ENCODE measurements at regions of chr11 and their contacts with region 1.

Region 1: DNA sequence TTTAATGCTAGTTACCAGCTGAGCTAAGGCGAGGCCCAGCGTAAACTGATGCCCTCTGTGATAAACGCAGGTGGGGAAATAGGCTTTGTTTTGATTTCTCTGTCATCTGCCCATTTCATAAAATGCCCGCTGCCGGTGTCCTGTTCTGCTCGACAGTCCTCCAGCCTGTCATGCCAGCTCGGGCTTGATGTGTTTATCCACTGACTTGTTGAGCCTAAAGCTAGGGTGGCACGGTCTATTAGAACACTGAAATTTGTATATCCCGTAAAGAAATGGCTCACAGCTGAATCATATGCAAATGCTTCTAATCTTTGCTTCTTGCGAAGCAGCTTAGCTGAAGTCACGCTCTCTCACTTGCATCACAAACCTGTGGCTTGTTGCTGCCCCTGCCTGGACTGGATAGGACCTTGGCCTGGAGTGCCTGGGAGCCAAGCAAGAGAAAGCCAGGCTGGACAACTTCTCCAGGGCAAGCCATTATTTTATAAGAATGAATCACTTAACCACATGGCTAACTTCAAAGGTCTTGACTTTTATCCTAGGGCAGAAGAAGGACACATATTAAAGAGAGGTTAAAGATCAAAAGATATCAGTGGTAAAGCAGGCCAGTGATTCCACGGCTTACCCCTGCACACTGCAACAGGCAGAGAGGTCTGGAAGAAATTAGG is 33.1 kb downstream of the EHF start:
- DNase-seq: peak; percentile 22
- ATAC-seq: peak; percentile 60
- H3K4me3 ChIP-seq: no peak overlapping the region
- H3K4me3 Mint-ChIP-seq: peak overlapping the region; percentile 75
- H3K27ac ChIP-seq: no peak overlapping the region
- H3K27ac Mint-ChIP-seq: peak overlapping the region; percentile 83
- H3K4me1 ChIP-seq: peaks cover 39 to 48% of the 10 kb centered on the region in 2 donors
- H3K4me1 Mint-ChIP-seq: peaks cover 41% of the 10 kb centered on the region
- H3K27me3 ChIP-seq: no peaks in the 10 kb centered on the region
- H3K27me3 Mint-ChIP-seq: peaks cover 4% of the 10 kb centered on the region
- CTCF ChIP-seq: no peak

Region 2: DNA sequence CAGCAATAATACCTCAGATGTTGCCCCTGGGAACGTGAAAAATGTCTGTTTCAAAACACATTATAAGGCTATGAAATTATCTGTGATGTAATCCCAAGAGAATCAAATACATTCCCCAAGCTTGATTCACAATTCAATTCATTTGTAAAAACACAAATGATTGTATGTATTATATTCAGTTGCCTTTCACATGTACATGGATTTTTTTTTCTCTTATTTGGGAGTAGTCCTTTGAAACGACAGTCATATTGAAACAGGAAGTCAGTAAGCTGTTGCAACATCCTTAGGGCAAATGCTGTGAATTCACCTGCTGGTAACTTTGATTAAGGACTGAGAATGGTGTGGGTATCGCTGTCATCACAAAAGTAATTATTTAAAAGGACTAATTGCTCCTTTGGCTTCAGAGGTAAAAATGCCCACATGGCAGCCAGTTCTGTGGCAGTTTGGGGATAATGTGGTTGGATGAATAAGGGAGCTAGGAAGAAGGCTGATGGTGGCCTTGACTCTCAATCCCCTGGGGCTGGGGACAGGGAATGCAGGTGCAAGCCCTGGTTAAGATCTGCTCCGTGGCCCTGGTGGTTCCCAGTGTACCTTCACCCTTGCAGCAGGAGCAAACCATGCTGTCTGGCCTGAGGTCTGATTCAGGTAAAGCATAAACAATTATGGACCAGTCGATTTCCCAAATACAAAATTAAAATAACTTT is 19.8 kb before region 1 on chr11:
- CTCF ChIA-PET with region 1: interaction called, 5 read pairs
- POLR2A ChIA-PET with region 1: no interaction called
- intact Hi-C with region 1: loop called (anchors 1 kb)
- DNase-seq: peak; percentile 74
- ATAC-seq: peak; percentile 76
- H3K4me3 ChIP-seq: no peak overlapping the region
- H3K4me3 Mint-ChIP-seq: peak overlapping the region; percentile 40
- H3K27ac ChIP-seq: peak overlapping the region in 1 of 2 donors; percentile 30
- H3K27ac Mint-ChIP-seq: peak overlapping the region; percentile 54
- H3K4me1 ChIP-seq: peaks cover 9 to 15% of the 10 kb centered on the region in 2 donors
- H3K4me1 Mint-ChIP-seq: peaks cover 18% of the 10 kb centered on the region
- H3K27me3 ChIP-seq: no peaks in the 10 kb centered on the region
- H3K27me3 Mint-ChIP-seq: no peaks in the 10 kb centered on the region
- CTCF ChIP-seq: no peak

Region 3: DNA sequence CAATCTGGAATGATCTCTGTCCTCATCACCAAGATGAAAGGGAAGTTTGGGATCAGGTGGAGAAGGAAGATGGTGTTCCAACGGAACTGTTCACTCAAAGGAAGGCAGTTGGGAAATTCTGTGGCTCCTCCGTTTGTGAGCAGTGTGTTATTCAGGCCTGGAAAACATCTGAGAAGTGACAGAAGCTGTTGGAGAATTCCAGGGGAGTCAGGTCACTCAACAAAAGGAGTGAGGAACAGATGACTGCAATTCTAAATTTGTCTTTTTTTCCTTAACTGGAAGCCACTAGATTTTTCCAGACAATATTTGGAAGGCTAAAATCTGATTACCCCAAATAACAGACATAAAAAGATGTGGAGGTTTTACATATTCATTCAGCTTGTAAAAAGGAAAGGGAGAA is 592.8 kb after region 1 on chr11:
- CTCF ChIA-PET with region 1: no interaction called
- POLR2A ChIA-PET with region 1: no interaction called
- intact Hi-C with region 1: no loop called
- DNase-seq: no peak
- ATAC-seq: no peak
- H3K4me3 ChIP-seq: no peak overlapping the region
- H3K4me3 Mint-ChIP-seq: no peak overlapping the region
- H3K27ac ChIP-seq: no peak overlapping the region
- H3K27ac Mint-ChIP-seq: no peak overlapping the region
- H3K4me1 ChIP-seq: no peaks in the 10 kb centered on the region
- H3K4me1 Mint-ChIP-seq: no peaks in the 10 kb centered on the region
- H3K27me3 ChIP-seq: no peaks in the 10 kb centered on the region
- H3K27me3 Mint-ChIP-seq: peaks cover 2% of the 10 kb centered on the region
- CTCF ChIP-seq: no peak

Measured in B cell (primary cell).